Right ventricle myocardium inferior (tissue), 1 donor: ENCODE measurements at regions of chr10 and their contacts with region 1.

Region 1: DNA sequence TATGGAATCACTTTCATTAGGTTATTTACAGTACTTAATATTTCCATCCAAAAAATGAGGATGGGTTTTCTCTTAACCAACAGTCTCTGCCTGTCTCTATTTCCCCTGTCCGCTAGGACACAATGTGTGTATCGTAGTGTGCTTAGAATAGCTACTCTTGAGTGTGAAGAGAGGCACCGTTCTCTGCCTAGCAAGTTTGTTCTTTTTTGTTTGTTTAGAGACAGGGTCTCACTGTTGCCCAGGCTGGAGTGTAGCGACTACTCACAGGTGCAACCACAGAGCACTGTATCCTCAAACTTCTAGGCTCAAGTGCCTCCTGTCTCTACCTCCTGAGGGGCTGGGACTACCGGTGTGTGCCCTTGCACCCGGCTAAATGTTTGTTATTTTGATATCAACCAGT is 121.9 kb downstream of the ANK3 start:
- DNase-seq: no peak
- ATAC-seq: peak; percentile 81

Region 2: GRCh38 chr10:60299961-60300883 is 32.4 kb after region 1 on chr10:
- intact Hi-C with region 1: loop called (anchors 1 kb)
- DNase-seq: no peak
- ATAC-seq: peak; percentile 89

Region 3: GRCh38 chr10:60332371-60332770 is 64.6 kb after region 1 on chr10:
- intact Hi-C with region 1: no loop called
- DNase-seq: no peak
- ATAC-seq: no peak